ENCODE measurements at regions of chr2 and their contacts with region 1.

Region 1: DNA sequence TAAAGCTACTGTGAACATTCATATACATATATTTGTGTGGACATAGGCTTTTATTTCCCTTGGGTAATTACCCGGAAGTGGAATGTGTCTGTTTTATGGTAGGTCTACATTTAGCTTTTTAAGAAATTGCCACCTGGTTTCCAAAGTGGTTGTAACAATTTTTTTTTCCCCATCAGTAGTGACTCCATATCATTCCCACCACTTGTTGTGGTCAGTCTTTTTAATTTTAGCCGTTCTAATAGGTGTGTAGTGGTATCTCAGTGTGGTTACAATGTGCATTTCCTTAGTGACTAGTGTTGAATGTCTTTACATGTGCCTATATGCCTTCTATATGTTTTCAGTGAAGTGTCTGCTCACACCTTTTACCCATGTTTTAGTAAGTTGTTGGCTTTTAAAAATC is 60.3 kb upstream of the MAPRE3 start:
- DNase-seq: no peak
- ATAC-seq: no peak
- H3K4me3 ChIP-seq: no peak overlapping the region
- H3K4me3 Mint-ChIP-seq: no peak overlapping the region
- H3K27ac ChIP-seq: no peak overlapping the region
- H3K27ac Mint-ChIP-seq: no peak overlapping the region
- H3K4me1 ChIP-seq: no peaks in the 10 kb centered on the region
- H3K4me1 Mint-ChIP-seq: no peaks in the 10 kb centered on the region
- H3K27me3 ChIP-seq: peaks cover 0 to 4% of the 10 kb centered on the region in 2 experiments
- H3K27me3 Mint-ChIP-seq: peaks cover 16% of the 10 kb centered on the region
- CTCF ChIP-seq: no peak

Region 2: GRCh38 chr2:26880910-26881435 is 29.2 kb before region 1 on chr2:
- CTCF ChIA-PET with region 1: no interaction called
- POLR2A ChIA-PET with region 1: no interaction called
- intact Hi-C with region 1: loop called in 1 of 2 experiments (anchors 1 kb)
- DNase-seq: no peak
- ATAC-seq: no peak
- H3K4me3 ChIP-seq: no peak overlapping the region
- H3K4me3 Mint-ChIP-seq: no peak overlapping the region
- H3K27ac ChIP-seq: no peak overlapping the region
- H3K27ac Mint-ChIP-seq: no peak overlapping the region
- H3K4me1 ChIP-seq: no peaks in the 10 kb centered on the region
- H3K4me1 Mint-ChIP-seq: no peaks in the 10 kb centered on the region
- H3K27me3 ChIP-seq: no peaks in the 10 kb centered on the region
- H3K27me3 Mint-ChIP-seq: peaks cover 31% of the 10 kb centered on the region
- CTCF ChIP-seq: no peak

Region 3: GRCh38 chr2:27356382-27357181 is 446.4 kb after region 1 on chr2 and contains the start of gene GTF3C2:
- CTCF ChIA-PET with region 1: no interaction called
- POLR2A ChIA-PET with region 1: no interaction called
- intact Hi-C with region 1: no loop called
- DNase-seq: peak; percentile 82 to 97 (median 93)
- ATAC-seq: peak; percentile 76
- H3K4me3 ChIP-seq: peak within 1 kb of the TSS; percentile 94 to 95
- H3K4me3 Mint-ChIP-seq: peak within 1 kb of the TSS; percentile 98
- H3K27ac ChIP-seq: peak within 1 kb of the TSS; percentile 87 to 95
- H3K27ac Mint-ChIP-seq: peak within 1 kb of the TSS; percentile 99
- H3K4me1 ChIP-seq: peaks cover 35% of the 10 kb centered on the region
- H3K4me1 Mint-ChIP-seq: peaks cover 51% of the 10 kb centered on the region
- H3K27me3 ChIP-seq: no peaks in the 10 kb centered on the region
- H3K27me3 Mint-ChIP-seq: no peaks in the 10 kb centered on the region
- CTCF ChIP-seq: no peak
- total RNA-seq, gene GTF3C2: 52.2 to 56.2 TPM

Measured in CD8-positive, alpha-beta T cell (primary cell).